Activated CD4-positive, alpha-beta T cell treated with anti-CD3 and anti-CD28 coated beads, Interleukin-2, amount 10 ng/mL, durations not matched to agents 7 days and 5 days (primary cell): ENCODE measurements at regions of chr19 and their contacts with region 1.

Region 1: GRCh38 chr19:3987619-3988371 is 2.5 kb upstream of the EEF2 start:
- DNase-seq: peak; percentile 91
- H3K4me3 Mint-ChIP-seq: peak overlapping the region; percentile 94
- H3K27ac Mint-ChIP-seq: peak overlapping the region; percentile 95
- H3K4me1 Mint-ChIP-seq: peaks cover 46% of the 10 kb centered on the region
- H3K27me3 Mint-ChIP-seq: no peaks in the 10 kb centered on the region

Region 2: DNA sequence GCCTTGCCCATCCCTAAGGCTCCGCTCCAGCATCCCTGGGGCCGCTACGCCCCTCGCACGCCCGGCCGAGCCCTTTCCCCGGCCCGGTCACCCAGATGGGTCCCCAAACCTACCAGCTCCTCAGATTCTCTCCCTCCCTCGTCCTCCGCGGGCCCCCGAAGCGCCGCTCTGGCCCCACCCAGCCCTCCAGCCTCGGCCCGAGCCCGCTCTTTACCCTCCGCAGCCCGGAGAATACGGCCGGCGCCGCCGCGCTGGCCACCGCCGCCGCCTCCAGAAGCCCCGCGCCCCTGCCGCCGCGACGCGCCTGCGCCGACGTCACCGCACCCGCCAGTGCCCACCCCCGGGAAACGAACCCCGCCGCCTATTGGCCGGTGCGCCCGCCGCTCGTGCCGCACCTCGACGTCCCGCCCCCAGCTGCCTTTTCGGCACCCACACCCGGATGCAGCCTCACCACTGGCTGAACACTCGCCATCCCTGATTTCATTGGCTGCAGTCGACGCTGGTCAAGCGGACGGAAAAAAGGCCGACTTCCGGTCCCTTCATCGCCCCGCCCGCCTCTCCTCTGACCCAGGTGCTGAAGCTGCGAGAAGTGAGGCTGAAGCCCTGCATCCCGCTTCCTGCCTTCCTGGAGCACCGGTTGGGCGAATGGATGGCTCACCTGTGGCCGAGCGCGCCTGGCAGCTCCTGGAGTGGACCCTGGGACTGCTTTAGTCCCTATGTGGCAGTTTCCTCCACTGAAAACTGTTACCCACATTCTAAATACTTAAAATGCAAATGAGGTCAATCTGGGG is 16.8 kb before region 1 on chr19 and contains the start of gene DAPK3:
- CTCF ChIA-PET with region 1: interaction called, 11 read pairs
- POLR2A ChIA-PET with region 1: interaction called, 6 read pairs
- DNase-seq: peak; percentile 93
- H3K4me3 Mint-ChIP-seq: peak within 1 kb of the TSS; percentile 91
- H3K27ac Mint-ChIP-seq: peak within 1 kb of the TSS; percentile 87
- H3K4me1 Mint-ChIP-seq: peaks cover 23% of the 10 kb centered on the region
- H3K27me3 Mint-ChIP-seq: no peaks in the 10 kb centered on the region
- total RNA-seq, gene DAPK3: 35.5 to 41.8 TPM